Esophagus muscularis mucosa (tissue), 4 donors: ENCODE measurements at regions of chr22 and their contacts with region 1.

Region 1: GRCh38 chr22:38069372-38070249 is 12.4 kb downstream of the PICK1 start:
- DNase-seq: no peak
- H3K4me3 ChIP-seq: peak overlapping the region in 1 of 4 donors; percentile 18
- H3K27ac ChIP-seq: peak overlapping the region; percentile 77 to 88 (median 86)
- H3K4me1 ChIP-seq: peaks cover 26 to 42% (median 28%) of the 10 kb centered on the region in 4 donors
- H3K27me3 ChIP-seq: no peaks in the 10 kb centered on the region
- CTCF ChIP-seq: peak; percentile 65 to 78 (median 68)
- EP300 ChIP-seq: no peak
- POLR2A ChIP-seq: no peak

Region 2: GRCh38 chr22:38109371-38110001 is 39.9 kb after region 1 on chr22:
- intact Hi-C with region 1: loop called (anchors 5 kb)
- DNase-seq: no peak
- H3K4me3 ChIP-seq: no peak overlapping the region
- H3K27ac ChIP-seq: no peak overlapping the region
- H3K4me1 ChIP-seq: peaks cover 2 to 16% (median 6%) of the 10 kb centered on the region in 4 donors
- H3K27me3 ChIP-seq: no peaks in the 10 kb centered on the region
- CTCF ChIP-seq: no peak
- EP300 ChIP-seq: no peak
- POLR2A ChIP-seq: no peak